ENCODE measurements at regions of chr14 and their contacts with region 1.

Region 1: GRCh38 chr14:74084277-74085046 is at the starts of genes ALDH6A1 and LIN52:
- DNase-seq: peak; percentile 100
- ATAC-seq: peak; percentile 85
- H3K4me3 ChIP-seq: peak within 1 kb of the TSS; percentile 80 to 90
- H3K4me3 Mint-ChIP-seq: peak within 1 kb of the TSS; percentile 98
- H3K27ac ChIP-seq: peak within 1 kb of the TSS; percentile 70 to 73
- H3K27ac Mint-ChIP-seq: peak within 1 kb of the TSS; percentile 96
- H3K4me1 ChIP-seq: peaks cover 19% of the 10 kb centered on the region
- H3K4me1 Mint-ChIP-seq: peaks cover 33% of the 10 kb centered on the region
- H3K27me3 ChIP-seq: no peaks in the 10 kb centered on the region
- H3K27me3 Mint-ChIP-seq: no peaks in the 10 kb centered on the region
- CTCF ChIP-seq: no peak
- total RNA-seq, gene ALDH6A1: 3.8 to 4.0 TPM
- total RNA-seq, gene LIN52: 6.1 to 6.8 TPM

Region 2: GRCh38 chr14:73136387-73137225 is 947.9 kb before region 1 on chr14 and contains the start of gene PSEN1:
- CTCF ChIA-PET with region 1: no interaction called
- POLR2A ChIA-PET with region 1: no interaction called
- intact Hi-C with region 1: loop called in 1 of 2 experiments (anchors 2 kb)
- DNase-seq: peak; percentile 98 to 100 (median 99)
- ATAC-seq: peak; percentile 96
- H3K4me3 ChIP-seq: peak within 1 kb of the TSS; percentile 84 to 92
- H3K4me3 Mint-ChIP-seq: peak within 1 kb of the TSS; percentile 97
- H3K27ac ChIP-seq: peak within 1 kb of the TSS; percentile 91 to 93
- H3K27ac Mint-ChIP-seq: peak within 1 kb of the TSS; percentile 99
- H3K4me1 ChIP-seq: peaks cover 17% of the 10 kb centered on the region
- H3K4me1 Mint-ChIP-seq: peaks cover 31% of the 10 kb centered on the region
- H3K27me3 ChIP-seq: no peaks in the 10 kb centered on the region
- H3K27me3 Mint-ChIP-seq: no peaks in the 10 kb centered on the region
- CTCF ChIP-seq: no peak
- total RNA-seq, gene PSEN1: 24.2 to 24.4 TPM

Region 3: GRCh38 chr14:73491256-73492042 is 593.0 kb before region 1 on chr14:
- CTCF ChIA-PET with region 1: no interaction called
- POLR2A ChIA-PET with region 1: no interaction called
- intact Hi-C with region 1: loop called in 1 of 2 experiments (anchors 10 kb)
- DNase-seq: peak in 8 of 9 experiments; percentile 31 to 86 (median 68)
- ATAC-seq: peak; percentile 72
- H3K4me3 ChIP-seq: peak overlapping the region; percentile 63 to 68
- H3K4me3 Mint-ChIP-seq: peak overlapping the region; percentile 86
- H3K27ac ChIP-seq: peak overlapping the region; percentile 66 to 78
- H3K27ac Mint-ChIP-seq: peak overlapping the region; percentile 91
- H3K4me1 ChIP-seq: peaks cover 37% of the 10 kb centered on the region
- H3K4me1 Mint-ChIP-seq: peaks cover 50% of the 10 kb centered on the region
- H3K27me3 ChIP-seq: no peaks in the 10 kb centered on the region
- H3K27me3 Mint-ChIP-seq: no peaks in the 10 kb centered on the region
- CTCF ChIP-seq: no peak

Region 4: GRCh38 chr14:75452900-75453747 is 1368.7 kb after region 1 on chr14:
- CTCF ChIA-PET with region 1: no interaction called
- POLR2A ChIA-PET with region 1: no interaction called
- intact Hi-C with region 1: no loop called
- DNase-seq: no peak
- ATAC-seq: no peak
- H3K4me3 ChIP-seq: no peak overlapping the region
- H3K4me3 Mint-ChIP-seq: no peak overlapping the region
- H3K27ac ChIP-seq: no peak overlapping the region
- H3K27ac Mint-ChIP-seq: no peak overlapping the region
- H3K4me1 ChIP-seq: no peaks in the 10 kb centered on the region
- H3K4me1 Mint-ChIP-seq: no peaks in the 10 kb centered on the region
- H3K27me3 ChIP-seq: no peaks in the 10 kb centered on the region
- H3K27me3 Mint-ChIP-seq: peaks cover 5% of the 10 kb centered on the region
- CTCF ChIP-seq: no peak

Measured in CD8-positive, alpha-beta T cell (primary cell).